A673 (cell line): ENCODE measurements at regions of chr7 and their contacts with region 1.

Region 1: DNA sequence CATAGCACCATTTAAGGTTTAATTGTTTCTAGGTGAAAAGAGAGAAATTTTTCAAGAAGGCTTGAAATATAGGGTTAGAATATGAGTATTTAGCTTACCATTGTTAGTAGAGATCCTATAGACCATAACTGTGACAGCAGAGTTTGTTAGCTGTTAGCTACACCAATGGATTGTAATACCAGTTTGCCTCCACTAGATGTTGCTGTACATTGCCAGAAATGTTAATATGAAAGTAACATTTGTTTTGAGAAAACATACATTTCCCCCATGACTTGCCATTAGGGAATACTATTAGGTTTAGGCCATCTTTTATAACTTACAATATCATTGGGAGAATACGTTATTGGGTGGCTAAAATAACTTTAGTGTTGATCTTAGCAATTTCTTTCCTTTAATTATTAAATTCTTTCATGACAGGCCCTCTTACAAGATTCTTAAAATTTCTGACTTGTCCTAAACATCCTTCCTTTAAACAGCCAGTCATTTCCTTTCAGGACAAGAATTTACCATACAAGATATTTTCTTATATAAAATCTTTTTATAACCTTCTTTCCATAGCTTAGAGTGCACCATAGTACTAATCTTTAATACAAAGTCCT is 39.5 kb downstream of the ZNF117 start:
- DNase-seq: peak; percentile 65
- H3K4me3 ChIP-seq: no peak overlapping the region
- H3K27ac ChIP-seq: no peak overlapping the region
- H3K4me1 ChIP-seq: no peaks in the 10 kb centered on the region
- H3K27me3 ChIP-seq: peaks cover 7% of the 10 kb centered on the region
- CTCF ChIP-seq: peak; percentile 75

Region 2: GRCh38 chr7:64902806-64903721 is 48.3 kb before region 1 on chr7 and contains the start of gene ZNF273:
- CTCF ChIA-PET with region 1: no interaction called
- POLR2A ChIA-PET with region 1: no interaction called
- intact Hi-C with region 1: no loop called
- DNase-seq: peak; percentile 95
- H3K4me3 ChIP-seq: peak within 1 kb of the TSS; percentile 80
- H3K27ac ChIP-seq: peak within 1 kb of the TSS; percentile 87
- H3K4me1 ChIP-seq: peaks cover 7% of the 10 kb centered on the region
- H3K27me3 ChIP-seq: no peaks in the 10 kb centered on the region
- CTCF ChIP-seq: no peak
- total RNA-seq, gene ZNF273: 10.1 and 11.5 TPM in 2 replicates

Region 3: DNA sequence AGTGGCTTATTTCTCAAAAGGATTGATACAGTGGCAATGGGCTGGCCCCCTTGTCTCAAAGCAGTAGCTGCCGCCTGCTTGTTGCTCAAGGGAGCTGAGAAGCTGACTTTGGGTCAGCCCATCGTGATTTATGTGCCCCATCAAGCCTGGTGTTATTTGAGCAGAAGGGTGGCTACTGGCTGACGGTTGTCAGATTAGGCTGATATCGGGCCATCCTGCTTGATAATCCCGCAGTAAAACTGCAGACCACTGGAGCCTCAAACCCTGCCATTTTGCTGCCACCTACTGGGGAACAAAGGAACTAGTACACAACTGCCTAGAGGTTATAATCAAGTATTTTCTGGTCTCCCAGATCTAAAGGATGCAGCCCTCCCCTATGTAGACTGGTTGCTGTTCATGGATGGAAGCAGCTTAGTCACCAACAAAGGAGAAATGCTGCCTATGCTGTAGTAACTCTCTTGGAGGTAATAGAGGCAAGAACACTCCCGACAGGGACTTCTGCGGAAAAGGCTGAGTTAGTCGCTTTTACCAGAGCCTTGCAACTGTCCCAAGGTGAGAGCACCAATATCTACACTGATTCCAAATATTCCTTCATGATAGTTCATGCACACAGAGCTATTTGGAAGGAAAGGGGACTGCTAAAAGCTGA is 356.4 kb after region 1 on chr7:
- CTCF ChIA-PET with region 1: no interaction called
- POLR2A ChIA-PET with region 1: no interaction called
- intact Hi-C with region 1: loop called (anchors 5 kb)
- DNase-seq: peak; percentile 79
- H3K4me3 ChIP-seq: no peak overlapping the region
- H3K27ac ChIP-seq: no peak overlapping the region
- H3K4me1 ChIP-seq: no peaks in the 10 kb centered on the region
- H3K27me3 ChIP-seq: no peaks in the 10 kb centered on the region
- CTCF ChIP-seq: peak; percentile 82